Natural killer cell (primary cell): ENCODE measurements at regions of chr13 and their contacts with region 1.

Region 1: DNA sequence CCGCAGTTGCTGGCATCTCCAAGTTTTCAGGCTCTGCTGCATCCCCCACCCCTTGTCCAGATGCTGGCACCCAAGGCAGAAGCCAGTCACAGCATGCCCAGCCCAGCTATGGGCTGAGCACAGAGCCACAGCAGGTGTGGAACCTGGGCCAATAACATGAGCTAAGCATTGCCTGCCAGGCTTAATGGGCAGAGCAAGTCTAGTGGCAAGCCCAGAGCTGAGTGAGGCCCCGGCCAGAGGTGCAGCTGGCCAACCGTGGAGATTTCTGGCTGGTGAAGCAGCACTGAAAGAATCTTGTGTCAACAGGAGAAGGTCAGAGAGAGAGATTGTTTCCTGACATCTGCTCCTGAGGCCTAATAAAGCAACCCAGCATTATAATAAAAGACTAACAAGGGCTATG is 111.0 kb downstream of the B3GLCT start:
- DNase-seq: no peak
- ATAC-seq: peak in 1 of 3 donors; percentile 14
- H3K4me3 ChIP-seq: no peak overlapping the region
- H3K4me3 Mint-ChIP-seq: no peak overlapping the region
- H3K27ac ChIP-seq: no peak overlapping the region
- H3K27ac Mint-ChIP-seq: no peak overlapping the region
- H3K4me1 ChIP-seq: no peaks in the 10 kb centered on the region
- H3K4me1 Mint-ChIP-seq: no peaks in the 10 kb centered on the region
- H3K27me3 ChIP-seq: no peaks in the 10 kb centered on the region
- H3K27me3 Mint-ChIP-seq: no peaks in the 10 kb centered on the region
- CTCF ChIP-seq: no peak

Region 2: DNA sequence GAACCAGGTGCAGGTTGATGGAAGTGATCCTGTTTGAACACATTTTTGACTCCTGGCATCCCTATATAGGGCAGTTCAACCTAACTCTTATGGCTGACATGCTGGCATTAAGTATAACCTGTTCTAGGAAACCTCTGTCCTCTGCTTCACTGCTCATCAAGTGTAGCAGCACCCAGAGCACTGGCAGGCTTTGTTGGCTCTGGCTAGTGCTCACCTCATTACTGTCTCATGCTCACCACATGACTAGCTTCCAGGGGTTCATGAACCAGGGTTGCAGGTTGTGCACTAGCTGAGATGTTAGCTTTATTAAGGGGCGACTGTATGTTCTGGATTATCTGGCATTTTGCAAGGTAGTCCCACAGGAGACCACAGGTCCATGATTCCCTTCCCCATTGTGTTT is 47.4 kb before region 1 on chr13:
- intact Hi-C with region 1: loop called (anchors 2 kb)
- DNase-seq: no peak
- ATAC-seq: no peak
- H3K4me3 ChIP-seq: no peak overlapping the region
- H3K4me3 Mint-ChIP-seq: no peak overlapping the region
- H3K27ac ChIP-seq: no peak overlapping the region
- H3K27ac Mint-ChIP-seq: no peak overlapping the region
- H3K4me1 ChIP-seq: no peaks in the 10 kb centered on the region
- H3K4me1 Mint-ChIP-seq: no peaks in the 10 kb centered on the region
- H3K27me3 ChIP-seq: no peaks in the 10 kb centered on the region
- H3K27me3 Mint-ChIP-seq: no peaks in the 10 kb centered on the region
- CTCF ChIP-seq: no peak

Region 3: DNA sequence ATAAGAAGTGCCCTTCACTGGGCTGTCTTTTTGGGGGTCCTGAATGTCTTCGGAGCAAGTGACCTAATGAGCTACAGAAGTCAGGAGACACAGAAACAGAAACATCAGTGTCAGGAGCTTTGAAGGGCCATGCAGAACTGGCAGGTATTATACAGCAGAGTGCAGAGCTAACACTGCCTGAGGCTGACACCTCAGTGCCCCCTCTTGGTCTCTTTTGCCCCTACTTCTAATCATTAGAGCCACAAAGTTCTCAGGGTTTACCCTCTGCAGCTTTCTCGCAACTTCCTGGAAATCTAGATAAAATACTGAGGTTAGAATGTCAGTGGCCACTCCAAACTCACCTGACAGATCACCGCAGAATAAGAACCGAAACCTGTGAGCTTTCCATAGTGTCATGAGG is 61.7 kb after region 1 on chr13:
- intact Hi-C with region 1: no loop called
- DNase-seq: no peak
- ATAC-seq: no peak
- H3K4me3 ChIP-seq: no peak overlapping the region
- H3K4me3 Mint-ChIP-seq: no peak overlapping the region
- H3K27ac ChIP-seq: no peak overlapping the region
- H3K27ac Mint-ChIP-seq: no peak overlapping the region
- H3K4me1 ChIP-seq: no peaks in the 10 kb centered on the region
- H3K4me1 Mint-ChIP-seq: no peaks in the 10 kb centered on the region
- H3K27me3 ChIP-seq: no peaks in the 10 kb centered on the region
- H3K27me3 Mint-ChIP-seq: peaks cover 0 to 9% of the 10 kb centered on the region in 2 donors
- CTCF ChIP-seq: no peak

Region 4: DNA sequence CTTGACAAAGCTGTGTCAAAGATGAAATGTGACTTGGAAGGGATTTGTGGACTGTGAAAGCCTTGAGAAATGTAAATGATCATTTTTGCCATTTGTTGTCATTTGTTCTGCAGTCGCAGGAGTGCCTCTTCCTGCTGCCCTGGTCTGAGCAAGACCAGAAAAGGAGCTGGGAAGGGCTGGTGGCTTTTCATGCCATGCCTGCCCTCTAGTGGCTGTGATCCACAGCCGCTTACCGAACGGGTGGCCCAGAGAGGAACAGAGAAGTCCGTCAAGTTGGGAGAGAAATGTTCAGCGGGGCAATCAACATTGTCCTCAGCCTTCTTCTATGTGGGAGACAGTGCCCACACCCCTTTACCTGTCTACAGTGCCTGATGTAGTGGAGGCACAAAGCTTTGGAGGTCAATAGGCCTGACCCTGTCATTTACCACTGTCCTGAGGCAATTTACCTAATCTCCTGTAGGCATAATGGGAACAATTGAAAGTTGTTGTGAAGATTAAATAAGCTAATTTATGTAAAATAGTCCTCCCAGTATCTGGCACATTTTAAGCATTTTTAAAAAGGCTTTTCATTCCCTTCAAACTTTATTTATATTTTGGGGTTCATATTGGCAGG is 113.4 kb after region 1 on chr13:
- intact Hi-C with region 1: no loop called
- DNase-seq: peak; percentile 34 to 63
- ATAC-seq: peak; percentile 76 to 94 (median 82)
- H3K4me3 ChIP-seq: no peak overlapping the region
- H3K4me3 Mint-ChIP-seq: no peak overlapping the region
- H3K27ac ChIP-seq: no peak overlapping the region
- H3K27ac Mint-ChIP-seq: no peak overlapping the region
- H3K4me1 ChIP-seq: no peaks in the 10 kb centered on the region
- H3K4me1 Mint-ChIP-seq: no peaks in the 10 kb centered on the region
- H3K27me3 ChIP-seq: no peaks in the 10 kb centered on the region
- H3K27me3 Mint-ChIP-seq: peaks cover 12 to 22% of the 10 kb centered on the region in 2 donors
- CTCF ChIP-seq: peak; percentile 70

Region 5: DNA sequence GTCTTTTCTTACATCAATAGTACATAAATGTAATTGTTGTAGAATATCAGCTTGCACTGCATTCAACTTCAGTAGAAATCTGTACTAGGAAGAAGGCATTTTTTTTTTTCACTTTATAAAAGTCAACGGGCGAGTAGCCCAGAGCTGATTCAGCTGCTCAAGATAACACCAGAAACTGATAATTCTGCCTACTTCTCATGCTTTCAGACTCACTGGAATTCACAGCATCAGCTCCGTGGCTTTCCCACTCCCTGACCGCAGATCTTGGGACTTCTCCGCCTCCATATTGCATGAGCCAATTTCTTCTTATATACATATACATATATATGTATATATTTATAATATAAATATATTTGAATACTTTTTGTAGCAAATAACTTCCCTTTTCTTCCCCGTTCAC is 165.5 kb after region 1 on chr13:
- intact Hi-C with region 1: no loop called
- DNase-seq: no peak
- ATAC-seq: no peak
- H3K4me3 ChIP-seq: no peak overlapping the region
- H3K4me3 Mint-ChIP-seq: no peak overlapping the region
- H3K27ac ChIP-seq: no peak overlapping the region
- H3K27ac Mint-ChIP-seq: no peak overlapping the region
- H3K4me1 ChIP-seq: no peaks in the 10 kb centered on the region
- H3K4me1 Mint-ChIP-seq: no peaks in the 10 kb centered on the region
- H3K27me3 ChIP-seq: no peaks in the 10 kb centered on the region
- H3K27me3 Mint-ChIP-seq: peaks cover 11 to 19% of the 10 kb centered on the region in 2 donors
- CTCF ChIP-seq: no peak